ENCODE measurements at regions of chr19 and their contacts with region 1.

Region 1: GRCh38 chr19:55632463-55632834 is 8.1 kb upstream of the ZNF784 start:
- DNase-seq: peak; percentile 74 to 97
- ATAC-seq: peak; percentile 62 to 83 (median 63)
- H3K4me3 ChIP-seq: no peak overlapping the region
- H3K4me3 Mint-ChIP-seq: peak overlapping the region; percentile 11
- H3K27ac ChIP-seq: no peak overlapping the region
- H3K27ac Mint-ChIP-seq: peak overlapping the region; percentile 15 to 77
- H3K4me1 ChIP-seq: peaks cover 39% of the 10 kb centered on the region
- H3K4me1 Mint-ChIP-seq: peaks cover 34 to 40% of the 10 kb centered on the region in 2 donors
- H3K27me3 ChIP-seq: no peaks in the 10 kb centered on the region
- H3K27me3 Mint-ChIP-seq: no peaks in the 10 kb centered on the region
- CTCF ChIP-seq: peak; percentile 75

Region 2: GRCh38 chr19:55643348-55644176 is 11.1 kb after region 1 on chr19 and contains the start of gene ZNF581:
- intact Hi-C with region 1: no loop called
- DNase-seq: peak; percentile 73 to 92
- ATAC-seq: peak; percentile 65 to 81 (median 66)
- H3K4me3 ChIP-seq: peak within 1 kb of the TSS; percentile 63
- H3K4me3 Mint-ChIP-seq: peak within 1 kb of the TSS; percentile 96
- H3K27ac ChIP-seq: peak within 1 kb of the TSS; percentile 68
- H3K27ac Mint-ChIP-seq: peak within 1 kb of the TSS; percentile 80 to 96
- H3K4me1 ChIP-seq: peaks cover 68% of the 10 kb centered on the region
- H3K4me1 Mint-ChIP-seq: peaks cover 33 to 52% of the 10 kb centered on the region in 2 donors
- H3K27me3 ChIP-seq: no peaks in the 10 kb centered on the region
- H3K27me3 Mint-ChIP-seq: no peaks in the 10 kb centered on the region
- CTCF ChIP-seq: no peak
- total RNA-seq, gene ZNF581: 15.4 to 21.9 (median 19.0) TPM

Region 3: DNA sequence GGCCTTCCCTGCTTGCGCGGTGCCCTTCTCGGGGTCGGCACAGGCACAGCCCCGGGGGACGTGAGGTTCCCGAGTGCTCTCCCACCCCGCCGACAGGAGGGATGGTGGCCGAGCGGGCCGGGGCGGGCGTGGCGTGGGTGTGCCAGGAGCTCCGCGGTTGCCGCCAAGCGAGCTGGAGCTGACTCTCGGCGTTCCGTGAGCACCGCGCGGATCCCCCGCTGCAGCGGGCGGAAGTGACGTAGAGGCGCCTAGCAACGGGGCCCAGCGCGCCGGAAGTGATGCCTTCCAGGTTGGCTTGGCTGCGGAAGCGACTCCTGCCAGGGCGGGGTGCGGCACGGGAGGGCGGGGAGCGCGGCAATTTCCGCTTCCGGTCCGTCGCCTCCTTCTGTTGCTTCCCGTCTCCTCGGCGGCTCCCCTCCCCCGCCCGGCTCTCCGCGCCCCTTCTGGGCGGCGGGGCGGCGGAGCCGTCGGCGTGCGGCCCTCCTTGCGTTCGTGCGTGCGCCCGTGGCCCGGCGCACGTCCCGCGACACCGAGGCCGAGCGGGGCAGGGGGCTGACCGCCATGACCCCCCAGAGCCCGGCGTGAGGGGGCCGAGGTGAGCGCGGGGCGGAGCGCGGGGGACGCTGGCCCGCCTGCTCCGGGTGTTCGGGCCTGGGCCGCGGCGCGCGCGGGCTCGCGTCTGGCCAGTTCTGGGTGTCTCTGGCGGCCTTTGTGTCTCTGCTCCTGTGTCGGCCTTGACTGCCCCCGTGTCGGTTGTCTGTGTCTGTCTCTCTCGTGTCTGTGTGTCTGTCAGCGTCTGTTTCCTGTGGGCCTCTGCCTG is 42.6 kb after region 1 on chr19 and contains the start of gene EPN1:
- intact Hi-C with region 1: no loop called
- DNase-seq: peak; percentile 90 to 99
- ATAC-seq: peak; percentile 90 to 96 (median 92)
- H3K4me3 ChIP-seq: peak within 1 kb of the TSS; percentile 85
- H3K4me3 Mint-ChIP-seq: peak within 1 kb of the TSS; percentile 93
- H3K27ac ChIP-seq: peak within 1 kb of the TSS; percentile 93
- H3K27ac Mint-ChIP-seq: peak within 1 kb of the TSS; percentile 88 to 99
- H3K4me1 ChIP-seq: peaks cover 58% of the 10 kb centered on the region
- H3K4me1 Mint-ChIP-seq: peaks cover 57 to 63% of the 10 kb centered on the region in 2 donors
- H3K27me3 ChIP-seq: no peaks in the 10 kb centered on the region
- H3K27me3 Mint-ChIP-seq: no peaks in the 10 kb centered on the region
- CTCF ChIP-seq: no peak
- total RNA-seq, gene EPN1: 47.6 to 56.4 (median 51.8) TPM

Region 4: GRCh38 chr19:55809381-55810058 is 177.1 kb after region 1 on chr19:
- intact Hi-C with region 1: loop called (anchors 10 kb)
- DNase-seq: peak in 1 of 2 donors; percentile 57
- ATAC-seq: peak in 1 of 3 donors; percentile 50
- H3K4me3 ChIP-seq: no peak overlapping the region
- H3K4me3 Mint-ChIP-seq: no peak overlapping the region
- H3K27ac ChIP-seq: no peak overlapping the region
- H3K27ac Mint-ChIP-seq: no peak overlapping the region
- H3K4me1 ChIP-seq: no peaks in the 10 kb centered on the region
- H3K4me1 Mint-ChIP-seq: peaks cover 0 to 5% of the 10 kb centered on the region in 2 donors
- H3K27me3 ChIP-seq: no peaks in the 10 kb centered on the region
- H3K27me3 Mint-ChIP-seq: peaks cover 0 to 17% of the 10 kb centered on the region in 2 donors
- CTCF ChIP-seq: no peak